Kidney (tissue), 22 donors: ENCODE measurements at regions of chr11 and their contacts with region 1.

Region 1: DNA sequence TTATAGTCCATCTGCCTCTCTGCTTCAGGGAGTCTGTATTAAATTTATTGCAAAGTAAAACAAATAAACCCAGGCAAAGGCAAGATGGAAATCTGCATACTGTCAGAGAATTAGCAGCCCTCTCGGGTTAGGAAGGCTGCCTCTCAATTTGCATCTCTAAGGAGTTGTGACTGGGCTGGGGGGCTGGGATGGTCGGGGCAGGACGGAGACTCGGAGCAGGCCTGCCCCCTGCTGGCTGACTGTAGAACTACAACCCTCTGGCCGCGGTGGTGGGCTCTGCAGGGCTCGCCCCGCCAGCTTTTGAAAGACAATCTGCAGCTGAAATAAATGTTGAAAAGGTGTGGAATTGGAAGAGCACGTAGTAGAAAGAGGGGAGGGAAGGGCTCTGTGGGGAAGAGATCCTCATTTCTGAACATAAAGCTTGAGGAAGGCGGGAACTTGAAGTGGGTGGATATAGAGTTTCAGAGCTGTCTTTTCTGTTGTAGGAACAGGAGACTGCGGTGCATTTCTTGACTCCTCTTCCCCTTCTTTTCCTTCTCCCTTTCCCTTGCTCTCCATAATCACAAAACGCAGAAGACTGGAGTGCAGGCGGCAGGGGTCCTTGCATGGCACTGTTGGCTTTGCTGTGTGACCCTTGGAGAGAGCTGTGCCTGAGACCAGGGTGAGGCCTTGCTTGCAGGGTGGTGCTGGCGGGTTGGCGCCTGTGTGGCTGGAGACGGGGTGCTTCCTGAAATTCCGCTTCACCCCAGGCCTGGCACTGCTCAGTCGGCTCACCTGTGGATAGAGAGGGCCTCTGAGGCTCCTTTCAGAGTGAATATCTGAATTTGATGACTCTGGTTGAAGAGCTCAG is 22.6 kb upstream of the PKNOX2 start:
- DNase-seq: peak in 4 of 5 donors; percentile 77 to 88 (median 79)
- H3K4me3 ChIP-seq: peak overlapping the region in 1 of 3 donors; percentile 1
- H3K27ac ChIP-seq: no peak overlapping the region
- H3K4me1 ChIP-seq: no peaks in the 10 kb centered on the region
- H3K27me3 ChIP-seq: no peaks in the 10 kb centered on the region
- CTCF ChIP-seq: peak; percentile 90

Region 2: GRCh38 chr11:124961972-124962609 is 179.8 kb before region 1 on chr11:
- intact Hi-C with region 1: loop called (anchors 10 kb)
- DNase-seq: peak in 3 of 5 donors; percentile 22 to 91 (median 86)
- H3K4me3 ChIP-seq: no peak overlapping the region
- H3K27ac ChIP-seq: no peak overlapping the region
- H3K4me1 ChIP-seq: no peaks in the 10 kb centered on the region
- H3K27me3 ChIP-seq: no peaks in the 10 kb centered on the region
- CTCF ChIP-seq: peak; percentile 74

Region 3: GRCh38 chr11:125211191-125211947 is 69.5 kb after region 1 on chr11:
- intact Hi-C with region 1: no loop called
- DNase-seq: peak in 4 of 5 donors; percentile 43 to 80 (median 74)
- H3K4me3 ChIP-seq: no peak overlapping the region
- H3K27ac ChIP-seq: no peak overlapping the region
- H3K4me1 ChIP-seq: peaks cover 0 to 5% (median 2%) of the 10 kb centered on the region in 3 donors
- H3K27me3 ChIP-seq: no peaks in the 10 kb centered on the region
- CTCF ChIP-seq: no peak